Activated CD4-positive, alpha-beta memory T cell treated with anti-CD3 and anti-CD28 coated beads for 36 hours (primary cell): ENCODE measurements at regions of chr10 and their contacts with region 1.

Region 1: GRCh38 chr10:110497438-110498086 is at the start of gene DUSP5:
- DNase-seq: peak; percentile 97
- H3K4me3 Mint-ChIP-seq: peak within 1 kb of the TSS; percentile 96
- H3K27ac Mint-ChIP-seq: peak within 1 kb of the TSS; percentile 97
- H3K4me1 Mint-ChIP-seq: peaks cover 48% of the 10 kb centered on the region
- H3K27me3 Mint-ChIP-seq: no peaks in the 10 kb centered on the region
- total RNA-seq, gene DUSP5: 171 to 176 TPM

Region 2: GRCh38 chr10:110225756-110226542 is 271.6 kb before region 1 on chr10:
- CTCF ChIA-PET with region 1: no interaction called
- POLR2A ChIA-PET with region 1: no interaction called
- intact Hi-C with region 1: loop called (anchors 1 kb)
- DNase-seq: peak; percentile 92
- H3K4me3 Mint-ChIP-seq: peak overlapping the region; percentile 98
- H3K27ac Mint-ChIP-seq: peak overlapping the region; percentile 96
- H3K4me1 Mint-ChIP-seq: peaks cover 41% of the 10 kb centered on the region
- H3K27me3 Mint-ChIP-seq: no peaks in the 10 kb centered on the region

Region 3: GRCh38 chr10:110363572-110364411 is 133.8 kb before region 1 on chr10:
- CTCF ChIA-PET with region 1: interaction called, 8 read pairs
- POLR2A ChIA-PET with region 1: interaction called, 11 read pairs
- intact Hi-C with region 1: no loop called
- DNase-seq: peak; percentile 84
- H3K4me3 Mint-ChIP-seq: peak overlapping the region; percentile 83
- H3K27ac Mint-ChIP-seq: peak overlapping the region; percentile 98
- H3K4me1 Mint-ChIP-seq: peaks cover 86% of the 10 kb centered on the region
- H3K27me3 Mint-ChIP-seq: no peaks in the 10 kb centered on the region

Region 4: GRCh38 chr10:110486680-110487410 is 10.7 kb before region 1 on chr10:
- CTCF ChIA-PET with region 1: no interaction called
- POLR2A ChIA-PET with region 1: no interaction called
- intact Hi-C with region 1: no loop called
- DNase-seq: no peak
- H3K4me3 Mint-ChIP-seq: no peak overlapping the region
- H3K27ac Mint-ChIP-seq: no peak overlapping the region
- H3K4me1 Mint-ChIP-seq: peaks cover 15% of the 10 kb centered on the region
- H3K27me3 Mint-ChIP-seq: no peaks in the 10 kb centered on the region

Region 5: GRCh38 chr10:110512461-110513187 is 15.1 kb after region 1 on chr10:
- CTCF ChIA-PET with region 1: interaction called, 11 read pairs
- POLR2A ChIA-PET with region 1: interaction called, 31 read pairs
- intact Hi-C with region 1: no loop called
- DNase-seq: peak; percentile 82
- H3K4me3 Mint-ChIP-seq: no peak overlapping the region
- H3K27ac Mint-ChIP-seq: peak overlapping the region; percentile 85
- H3K4me1 Mint-ChIP-seq: peaks cover 60% of the 10 kb centered on the region
- H3K27me3 Mint-ChIP-seq: no peaks in the 10 kb centered on the region

Region 6: DNA sequence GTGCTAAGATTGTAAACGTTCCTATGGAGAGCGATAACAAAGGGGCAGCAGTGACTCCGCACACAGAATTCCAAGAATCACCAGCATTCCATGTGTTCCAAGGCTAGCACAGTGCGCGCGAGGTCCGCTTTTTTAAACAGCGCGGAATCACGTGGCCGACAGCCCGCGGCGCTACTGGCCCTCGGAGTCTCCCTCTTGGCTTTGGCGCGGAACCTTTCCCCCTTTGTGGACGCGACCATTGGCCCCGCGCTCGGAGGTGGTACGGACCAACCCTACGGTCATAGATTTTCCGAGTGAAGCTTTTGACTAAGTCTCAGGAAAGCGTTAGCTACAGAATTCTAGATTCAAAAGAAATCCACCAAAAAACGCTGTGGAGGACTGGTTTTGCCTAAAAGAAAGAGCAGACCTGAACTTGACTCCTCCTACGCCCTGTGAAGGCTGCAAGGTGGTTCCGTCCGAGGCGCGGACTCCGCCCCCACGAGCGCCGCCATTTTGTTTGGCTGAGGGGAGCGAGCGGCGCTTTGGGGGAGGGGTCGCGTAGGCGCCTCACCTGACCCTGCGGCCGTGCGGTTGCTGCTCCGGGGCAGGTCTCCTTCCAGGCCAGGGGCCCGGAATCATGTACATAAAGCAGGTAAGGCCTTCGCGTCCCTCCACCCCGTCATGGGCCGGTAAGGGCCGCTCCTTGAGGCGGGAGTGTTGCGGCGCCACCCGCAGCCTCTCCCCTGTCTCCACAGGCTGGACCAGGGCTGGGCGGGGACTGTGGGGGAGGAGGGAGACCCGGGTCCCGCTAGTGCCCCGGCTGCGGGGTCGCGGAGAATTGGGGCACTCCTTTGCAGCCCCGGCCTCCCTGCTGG is 69.9 kb after region 1 on chr10 and contains the start of gene SMC3:
- CTCF ChIA-PET with region 1: interaction called, 4 read pairs
- POLR2A ChIA-PET with region 1: interaction called, 5 read pairs
- intact Hi-C with region 1: loop called (anchors 1 kb)
- DNase-seq: peak; percentile 94
- H3K4me3 Mint-ChIP-seq: peak within 1 kb of the TSS; percentile 93
- H3K27ac Mint-ChIP-seq: peak within 1 kb of the TSS; percentile 97
- H3K4me1 Mint-ChIP-seq: peaks cover 43% of the 10 kb centered on the region
- H3K27me3 Mint-ChIP-seq: peaks cover 10% of the 10 kb centered on the region
- total RNA-seq, gene SMC3: 89.5 to 92.2 TPM

Region 7: GRCh38 chr10:110643653-110644597 is 146.4 kb after region 1 on chr10 and contains the start of gene RBM20:
- CTCF ChIA-PET with region 1: no interaction called
- POLR2A ChIA-PET with region 1: no interaction called
- intact Hi-C with region 1: no loop called
- DNase-seq: peak; percentile 21
- H3K4me3 Mint-ChIP-seq: peak within 1 kb of the TSS; percentile 74
- H3K27ac Mint-ChIP-seq: no peak within 1 kb of the TSS
- H3K4me1 Mint-ChIP-seq: peaks cover 25% of the 10 kb centered on the region
- H3K27me3 Mint-ChIP-seq: peaks cover 50% of the 10 kb centered on the region
- total RNA-seq, gene RBM20: not detected